Dorsolateral prefrontal cortex (tissue), 120 donors: ENCODE measurements at regions of chr4 and their contacts with region 1.

Region 1: GRCh38 chr4:142846729-142847596 is 862 bp upstream of the INPP4B start:
- DNase-seq: peak in 8 of 10 donors; percentile 4 to 73 (median 52)
- H3K4me3 ChIP-seq: peak overlapping the region; percentile 43 to 83 (median 69)
- H3K27ac ChIP-seq: peak overlapping the region in 55 of 59 donors; percentile 10 to 91 (median 81)
- H3K27me3 ChIP-seq: peaks cover 0 to 25% (median 0%) of the 10 kb centered on the region in 45 donors
- CTCF ChIP-seq: peak in 42 of 56 donors; percentile 9 to 55 (median 33)

Region 2: DNA sequence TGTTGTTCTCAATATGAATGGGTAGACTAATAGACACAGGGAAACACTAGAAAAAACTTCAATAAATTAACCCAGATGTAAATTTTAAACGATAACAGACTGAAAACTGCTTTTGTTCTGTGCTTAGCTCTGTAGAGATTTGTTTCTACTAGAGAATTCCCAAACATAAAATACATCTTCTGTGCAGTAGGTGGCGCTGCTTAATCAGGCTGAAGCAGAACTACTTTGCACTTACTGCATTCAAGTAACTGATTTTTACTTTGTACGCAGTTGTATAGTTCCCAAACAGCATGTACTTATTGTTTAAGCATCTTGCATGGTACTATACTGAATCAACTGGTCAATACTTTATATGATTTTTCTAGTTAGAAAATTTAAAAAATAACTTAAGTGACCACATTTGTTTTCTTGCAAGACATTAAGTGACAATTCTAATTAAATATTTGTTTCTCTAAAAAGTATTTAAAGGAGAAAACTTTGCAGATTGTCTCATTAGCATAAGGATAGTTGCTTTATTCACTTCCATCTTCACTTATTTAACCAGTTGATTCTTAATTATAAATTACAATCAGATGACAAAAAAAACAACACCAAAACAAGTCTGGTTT is 720.0 kb before region 1 on chr4:
- intact Hi-C with region 1: loop called (anchors 10 kb)
- DNase-seq: peak in 4 of 10 donors; percentile 6 to 69 (median 29)
- H3K4me3 ChIP-seq: no peak overlapping the region
- H3K27ac ChIP-seq: no peak overlapping the region
- H3K27me3 ChIP-seq: no peaks in the 10 kb centered on the region
- CTCF ChIP-seq: peak; percentile 67 to 95 (median 86)

Region 3: DNA sequence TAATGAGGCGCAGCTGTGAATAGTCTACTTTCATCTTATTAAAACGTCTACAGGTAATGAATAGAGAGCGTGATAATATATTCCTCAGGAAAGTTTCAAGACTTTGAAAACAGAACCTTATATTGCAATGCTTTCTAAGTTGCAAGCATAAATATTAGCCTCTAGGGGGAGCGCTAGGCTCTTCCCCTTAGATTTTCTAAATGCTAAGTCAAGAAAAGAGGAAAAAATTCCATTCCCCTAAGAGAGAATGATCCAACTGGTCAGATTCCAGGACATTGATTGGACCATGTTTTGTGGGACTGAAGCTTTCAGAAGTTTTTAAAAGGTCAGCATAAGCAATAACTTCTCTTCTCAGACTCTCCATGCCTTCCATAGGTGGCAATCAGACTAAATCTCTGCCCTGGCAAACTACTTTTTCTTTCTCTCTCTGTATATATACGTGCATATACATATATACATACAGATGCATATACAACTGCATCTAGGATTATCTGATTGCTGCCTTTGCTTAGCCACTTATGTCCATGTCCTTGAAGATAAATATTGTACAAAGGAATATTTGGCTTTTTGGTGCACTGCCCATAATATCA is 493.7 kb before region 1 on chr4:
- intact Hi-C with region 1: loop called in 1 of 2 experiments (anchors 5 kb)
- DNase-seq: no peak
- H3K4me3 ChIP-seq: no peak overlapping the region
- H3K27ac ChIP-seq: peak overlapping the region in 2 of 59 donors; percentile 2 to 54
- H3K27me3 ChIP-seq: no peaks in the 10 kb centered on the region
- CTCF ChIP-seq: peak; percentile 70 to 92 (median 84)

Region 4: GRCh38 chr4:143035661-143036060 is 188.7 kb after region 1 on chr4:
- intact Hi-C with region 1: no loop called
- DNase-seq: no peak
- H3K4me3 ChIP-seq: no peak overlapping the region
- H3K27ac ChIP-seq: no peak overlapping the region
- H3K27me3 ChIP-seq: no peaks in the 10 kb centered on the region
- CTCF ChIP-seq: no peak

Region 5: DNA sequence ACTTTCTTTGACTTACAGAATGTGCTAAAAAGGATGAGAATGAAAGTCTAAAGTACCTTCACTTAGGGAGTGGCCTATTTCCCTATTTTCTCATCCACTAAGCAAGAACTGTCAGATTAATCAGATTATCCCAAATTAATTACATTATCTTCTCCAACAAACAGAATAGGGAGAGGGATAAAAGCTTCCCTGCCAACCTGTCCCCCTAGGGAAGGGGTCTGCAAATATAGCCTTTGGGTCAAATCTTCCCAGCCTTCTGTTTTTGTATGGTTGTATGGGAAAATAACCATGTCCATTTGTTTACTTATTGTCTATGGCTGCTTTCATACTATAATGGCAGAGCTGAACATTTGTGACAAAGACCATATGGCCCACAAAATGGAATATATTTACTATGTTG is 280.7 kb after region 1 on chr4:
- intact Hi-C with region 1: no loop called
- DNase-seq: no peak
- H3K4me3 ChIP-seq: no peak overlapping the region
- H3K27ac ChIP-seq: no peak overlapping the region
- H3K27me3 ChIP-seq: no peaks in the 10 kb centered on the region
- CTCF ChIP-seq: no peak